Activated naive CD4-positive, alpha-beta T cell treated with anti-CD3 and anti-CD28 coated beads for 36 hours (primary cell): ENCODE measurements at regions of chr2 and their contacts with region 1.

Region 1: GRCh38 chr2:109510136-109511028 is 103.4 kb downstream of the SEPTIN10 start:
- DNase-seq: peak; percentile 89
- H3K4me3 Mint-ChIP-seq: no peak overlapping the region
- H3K27ac Mint-ChIP-seq: no peak overlapping the region
- H3K4me1 Mint-ChIP-seq: peaks cover 3% of the 10 kb centered on the region
- H3K27me3 Mint-ChIP-seq: no peaks in the 10 kb centered on the region

Region 2: GRCh38 chr2:108855194-108855593 is 655.2 kb before region 1 on chr2:
- CTCF ChIA-PET with region 1: no interaction called
- intact Hi-C with region 1: loop called (anchors 1 kb)
- DNase-seq: no peak
- H3K4me3 Mint-ChIP-seq: no peak overlapping the region
- H3K27ac Mint-ChIP-seq: no peak overlapping the region
- H3K4me1 Mint-ChIP-seq: peaks cover 2% of the 10 kb centered on the region
- H3K27me3 Mint-ChIP-seq: no peaks in the 10 kb centered on the region

Region 3: GRCh38 chr2:108927936-108928659 is 582.3 kb before region 1 on chr2:
- CTCF ChIA-PET with region 1: interaction called, 4 read pairs
- intact Hi-C with region 1: loop called (anchors 2 kb)
- DNase-seq: peak; percentile 66
- H3K4me3 Mint-ChIP-seq: no peak overlapping the region
- H3K27ac Mint-ChIP-seq: no peak overlapping the region
- H3K4me1 Mint-ChIP-seq: no peaks in the 10 kb centered on the region
- H3K27me3 Mint-ChIP-seq: no peaks in the 10 kb centered on the region

Region 4: DNA sequence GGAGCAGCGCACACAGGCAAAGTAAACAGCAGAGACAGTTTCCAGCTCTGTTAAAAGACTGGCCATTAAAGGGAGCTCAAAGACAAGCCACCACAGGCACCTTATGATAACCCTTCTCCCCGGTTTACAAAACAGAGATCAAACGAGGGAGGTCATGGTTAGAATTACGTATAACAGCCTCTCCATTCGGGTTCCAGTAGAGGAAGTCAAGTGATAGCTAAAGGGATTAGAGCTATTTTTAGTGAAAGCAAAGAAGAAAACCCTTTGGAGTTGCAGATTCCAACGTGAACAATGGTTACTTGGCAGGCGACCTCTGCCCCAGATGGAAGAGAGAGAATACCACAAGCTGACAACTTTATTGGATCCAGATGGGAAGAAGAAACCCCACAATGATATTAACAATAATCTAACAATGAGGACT is 490.2 kb before region 1 on chr2:
- CTCF ChIA-PET with region 1: no interaction called
- intact Hi-C with region 1: loop called (anchors 5 kb)
- DNase-seq: peak; percentile 31
- H3K4me3 Mint-ChIP-seq: no peak overlapping the region
- H3K27ac Mint-ChIP-seq: peak overlapping the region; percentile 4
- H3K4me1 Mint-ChIP-seq: peaks cover 20% of the 10 kb centered on the region
- H3K27me3 Mint-ChIP-seq: no peaks in the 10 kb centered on the region

Region 5: DNA sequence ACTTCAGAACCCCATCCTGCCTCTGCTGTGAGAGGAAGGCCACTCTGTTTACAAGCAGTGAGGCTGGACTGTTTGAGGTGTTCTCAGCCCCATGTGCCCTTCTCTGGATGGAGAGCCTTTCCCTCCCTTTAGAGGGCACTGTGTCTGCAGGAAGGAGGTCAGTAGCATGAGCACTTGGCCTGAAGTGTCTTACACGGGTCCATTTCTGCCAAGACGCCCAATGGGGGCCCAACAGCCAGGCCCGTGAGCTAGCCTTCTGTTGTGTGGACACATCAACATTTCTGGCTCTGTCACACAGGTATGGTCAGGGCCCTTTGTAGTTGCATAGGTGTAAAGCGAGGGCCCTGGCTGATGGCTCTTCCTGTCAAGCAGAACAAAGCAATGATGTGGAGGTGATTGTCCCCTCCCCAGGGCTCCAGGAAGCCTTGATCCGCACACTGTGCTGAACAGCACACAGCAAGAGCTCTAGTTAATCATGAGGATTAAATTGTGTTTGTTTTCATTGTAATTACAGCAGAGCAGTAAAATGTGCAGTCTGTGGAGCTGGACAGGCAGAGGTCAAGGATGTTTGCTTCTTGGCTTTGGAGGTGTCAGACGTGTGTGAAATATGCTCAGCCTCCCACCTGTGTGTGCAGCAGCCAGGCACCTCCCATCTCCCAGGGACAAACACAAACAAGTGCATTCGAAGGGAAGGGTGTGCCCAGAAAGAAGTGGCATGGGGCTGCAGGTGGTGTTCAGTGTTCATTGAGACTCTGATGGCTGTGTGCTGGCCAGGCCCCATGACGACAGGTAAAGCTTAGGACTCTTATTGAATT is 249.3 kb before region 1 on chr2:
- CTCF ChIA-PET with region 1: interaction called, 3 read pairs
- intact Hi-C with region 1: loop called (anchors 1 kb)
- DNase-seq: no peak
- H3K4me3 Mint-ChIP-seq: no peak overlapping the region
- H3K27ac Mint-ChIP-seq: no peak overlapping the region
- H3K4me1 Mint-ChIP-seq: peaks cover 5% of the 10 kb centered on the region
- H3K27me3 Mint-ChIP-seq: no peaks in the 10 kb centered on the region

Region 6: GRCh38 chr2:109331896-109332848 is 178.2 kb before region 1 on chr2:
- CTCF ChIA-PET with region 1: no interaction called
- intact Hi-C with region 1: loop called (anchors 1 kb)
- DNase-seq: peak; percentile 55
- H3K4me3 Mint-ChIP-seq: peak overlapping the region; percentile 59
- H3K27ac Mint-ChIP-seq: no peak overlapping the region
- H3K4me1 Mint-ChIP-seq: peaks cover 35% of the 10 kb centered on the region
- H3K27me3 Mint-ChIP-seq: no peaks in the 10 kb centered on the region

Region 7: DNA sequence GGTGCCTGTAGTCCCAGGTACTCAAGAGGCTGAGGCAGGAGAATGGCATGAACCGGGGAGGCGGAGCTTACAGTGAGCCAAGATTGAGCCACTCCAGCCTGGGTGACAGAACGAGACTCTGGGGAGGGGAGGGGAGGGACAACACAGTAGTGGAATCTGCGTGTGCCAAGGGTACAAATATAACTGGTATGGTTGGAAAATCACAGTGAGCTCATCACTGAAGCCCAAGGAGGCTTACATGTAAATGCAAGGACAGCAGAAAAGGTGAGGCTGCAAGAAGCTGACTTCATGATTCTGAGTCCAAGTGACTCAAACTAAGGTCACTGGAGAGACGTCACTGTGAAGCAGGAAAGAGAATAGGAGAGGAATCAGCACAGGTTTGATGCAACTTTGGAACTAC is 94.2 kb after region 1 on chr2:
- CTCF ChIA-PET with region 1: no interaction called
- intact Hi-C with region 1: no loop called
- DNase-seq: no peak
- H3K4me3 Mint-ChIP-seq: no peak overlapping the region
- H3K27ac Mint-ChIP-seq: no peak overlapping the region
- H3K4me1 Mint-ChIP-seq: peaks cover 6% of the 10 kb centered on the region
- H3K27me3 Mint-ChIP-seq: peaks cover 34% of the 10 kb centered on the region